ENCODE measurements at regions of chr17 and their contacts with region 1.

Region 1: GRCh38 chr17:2847381-2848333 is 51.4 kb downstream of the RAP1GAP2 start:
- DNase-seq: no peak
- H3K4me3 ChIP-seq: no peak overlapping the region
- H3K27ac ChIP-seq: no peak overlapping the region
- H3K4me1 ChIP-seq: no peaks in the 10 kb centered on the region
- H3K27me3 ChIP-seq: peaks cover 8 to 12% of the 10 kb centered on the region in 2 experiments
- CTCF ChIP-seq: no peak
- POLR2A ChIP-seq: no peak

Region 2: GRCh38 chr17:2837147-2837561 is 10.5 kb before region 1 on chr17:
- CTCF ChIA-PET with region 1: interaction called, 20 read pairs
- POLR2A ChIA-PET with region 1: no interaction called
- dilution Hi-C with region 1: no loop called
- intact Hi-C with region 1: no loop called
- DNase-seq: no peak
- H3K4me3 ChIP-seq: no peak overlapping the region
- H3K27ac ChIP-seq: no peak overlapping the region
- H3K4me1 ChIP-seq: no peaks in the 10 kb centered on the region
- H3K27me3 ChIP-seq: peaks cover 0 to 2% of the 10 kb centered on the region in 2 experiments
- CTCF ChIP-seq: no peak
- POLR2A ChIP-seq: no peak

Region 3: GRCh38 chr17:2929881-2930533 is 82.3 kb after region 1 on chr17:
- CTCF ChIA-PET with region 1: interaction called, 21 read pairs
- POLR2A ChIA-PET with region 1: no interaction called
- dilution Hi-C with region 1: no loop called
- intact Hi-C with region 1: loop called (anchors 2 kb)
- DNase-seq: peak; percentile 17
- H3K4me3 ChIP-seq: no peak overlapping the region
- H3K27ac ChIP-seq: no peak overlapping the region
- H3K4me1 ChIP-seq: no peaks in the 10 kb centered on the region
- H3K27me3 ChIP-seq: peaks cover 0 to 4% of the 10 kb centered on the region in 2 experiments
- CTCF ChIP-seq: peak; percentile 53 to 79
- POLR2A ChIP-seq: no peak

Region 4: DNA sequence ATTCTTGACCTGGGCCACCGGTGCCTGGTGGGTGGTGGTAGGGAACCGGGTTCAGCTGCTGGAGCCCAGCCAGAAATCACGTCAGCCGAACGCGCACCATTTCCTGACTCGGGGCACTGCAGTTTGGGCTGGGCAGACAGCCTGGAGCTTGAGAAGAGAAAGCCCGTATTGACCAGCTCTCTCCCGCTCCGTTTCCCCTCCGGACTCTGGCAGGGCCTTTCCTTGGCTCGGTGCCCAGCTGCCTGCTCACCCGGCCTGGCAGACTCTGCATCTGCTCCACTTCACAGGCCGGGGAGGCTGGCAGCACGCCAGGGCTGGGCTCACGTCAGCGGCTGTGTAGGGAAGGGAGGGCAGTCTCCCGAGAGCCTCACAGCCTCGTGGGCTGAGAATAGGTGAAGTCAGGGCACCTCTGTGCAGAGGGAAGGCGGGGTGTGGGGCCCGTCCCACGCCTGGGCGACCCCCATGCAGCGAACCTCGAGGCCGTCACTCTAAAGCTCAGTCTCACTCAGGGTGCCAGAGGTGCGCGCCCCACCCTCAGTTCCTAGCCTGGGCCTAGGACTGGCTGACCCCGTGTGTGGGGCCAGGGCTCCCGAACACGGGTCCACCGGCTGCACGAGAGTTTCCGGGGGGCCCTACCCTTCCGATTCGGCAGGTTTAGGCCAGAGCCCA is 156.6 kb after region 1 on chr17:
- CTCF ChIA-PET with region 1: interaction called, 26 read pairs
- POLR2A ChIA-PET with region 1: no interaction called
- dilution Hi-C with region 1: no loop called
- intact Hi-C with region 1: loop called (anchors 2 kb)
- DNase-seq: peak; percentile 99
- H3K4me3 ChIP-seq: no peak overlapping the region
- H3K27ac ChIP-seq: peak overlapping the region; percentile 85
- H3K4me1 ChIP-seq: peaks cover 17% of the 10 kb centered on the region
- H3K27me3 ChIP-seq: no peaks in the 10 kb centered on the region
- CTCF ChIP-seq: no peak
- POLR2A ChIP-seq: peak; percentile 20

Region 5: GRCh38 chr17:3865176-3865575 is 1017.5 kb after region 1 on chr17:
- CTCF ChIA-PET with region 1: no interaction called
- POLR2A ChIA-PET with region 1: no interaction called
- dilution Hi-C with region 1: no loop called
- intact Hi-C with region 1: no loop called
- DNase-seq: no peak
- H3K4me3 ChIP-seq: no peak overlapping the region
- H3K27ac ChIP-seq: no peak overlapping the region
- H3K4me1 ChIP-seq: no peaks in the 10 kb centered on the region
- H3K27me3 ChIP-seq: no peaks in the 10 kb centered on the region
- CTCF ChIP-seq: no peak
- POLR2A ChIP-seq: no peak